HCT116 (cell line): ENCODE measurements at regions of chr2 and their contacts with region 1.

Region 1: DNA sequence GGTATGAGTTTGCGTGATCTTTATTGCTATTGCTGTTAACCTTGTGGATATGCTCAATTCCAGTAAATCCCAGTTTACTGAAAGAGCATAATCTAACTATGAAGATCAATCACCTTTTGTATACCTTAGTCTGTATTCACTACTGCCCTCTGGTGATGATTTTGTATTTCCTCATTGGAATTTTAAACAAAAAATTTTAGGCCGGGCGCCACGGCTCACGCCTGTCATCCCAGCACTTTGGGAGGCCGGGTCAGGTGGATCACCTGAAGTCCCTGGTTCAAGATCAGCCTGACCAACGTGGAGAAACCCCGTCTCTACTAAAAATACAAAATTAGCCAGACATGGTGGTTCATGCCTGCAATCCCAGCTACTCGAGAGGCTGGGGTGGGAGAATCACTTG is 5.1 kb downstream of the COMMD1 start:
- DNase-seq: no peak
- ATAC-seq: peak; percentile 51
- H3K4me3 ChIP-seq: no peak overlapping the region
- H3K27ac ChIP-seq: no peak overlapping the region
- H3K4me1 ChIP-seq: peaks cover 6 to 7% of the 10 kb centered on the region in 2 experiments; a peak in 3 of 4 replicates
- H3K27me3 ChIP-seq: no peaks in the 10 kb centered on the region
- CTCF ChIP-seq: peak; percentile 24 to 53 (median 38); a peak in 5 of 6 replicates
- POLR2A ChIP-seq: no peak
- RAD21 ChIP-seq: peak; percentile 52

Region 2: DNA sequence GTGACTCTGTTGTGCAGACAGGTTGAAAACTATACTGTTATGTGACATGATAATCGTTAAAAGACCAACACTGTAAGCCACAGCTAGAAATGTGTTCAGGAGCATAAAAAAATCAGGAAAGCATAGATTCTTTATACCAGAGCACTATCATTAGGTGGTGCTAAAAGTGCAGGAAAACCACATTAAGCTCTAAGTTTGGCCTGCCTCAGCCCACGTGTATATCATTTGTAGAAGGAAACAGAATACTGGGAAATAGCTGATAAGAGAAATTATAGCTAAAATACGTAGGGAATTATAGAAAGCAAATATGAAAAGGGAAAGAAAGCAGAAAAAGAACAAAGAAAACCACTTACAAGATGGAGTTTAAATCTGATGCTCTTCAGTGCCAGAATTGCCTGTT is 775.1 kb before region 1 on chr2:
- CTCF ChIA-PET with region 1: no interaction called
- POLR2A ChIA-PET with region 1: no interaction called
- RAD21 ChIA-PET with region 1: no interaction called
- intact Hi-C with region 1: loop called (anchors 10 kb)
- DNase-seq: peak; percentile 13
- ATAC-seq: peak; percentile 70
- H3K4me3 ChIP-seq: no peak overlapping the region
- H3K27ac ChIP-seq: no peak overlapping the region
- H3K4me1 ChIP-seq: no peaks in the 10 kb centered on the region
- H3K27me3 ChIP-seq: no peaks in the 10 kb centered on the region
- CTCF ChIP-seq: peak; percentile 23 to 63 (median 28); a peak in 4 of 6 replicates
- POLR2A ChIP-seq: no peak
- RAD21 ChIP-seq: peak; percentile 84

Region 3: GRCh38 chr2:62297624-62298010 is 387.0 kb after region 1 on chr2:
- CTCF ChIA-PET with region 1: no interaction called
- POLR2A ChIA-PET with region 1: no interaction called
- RAD21 ChIA-PET with region 1: no interaction called
- intact Hi-C with region 1: loop called (anchors 5 kb)
- DNase-seq: no peak
- ATAC-seq: peak; percentile 48; the same call in 1 of the 2 replicates
- H3K4me3 ChIP-seq: no peak overlapping the region
- H3K27ac ChIP-seq: no peak overlapping the region
- H3K4me1 ChIP-seq: peaks cover 17 to 23% of the 10 kb centered on the region in 2 experiments
- H3K27me3 ChIP-seq: no peaks in the 10 kb centered on the region
- CTCF ChIP-seq: peak in 2 of 3 experiments; percentile 33 to 36; a peak in 4 of 6 replicates
- POLR2A ChIP-seq: no peak
- RAD21 ChIP-seq: no peak